ENCODE measurements at regions of chr9 and their contacts with region 1.

Region 1: DNA sequence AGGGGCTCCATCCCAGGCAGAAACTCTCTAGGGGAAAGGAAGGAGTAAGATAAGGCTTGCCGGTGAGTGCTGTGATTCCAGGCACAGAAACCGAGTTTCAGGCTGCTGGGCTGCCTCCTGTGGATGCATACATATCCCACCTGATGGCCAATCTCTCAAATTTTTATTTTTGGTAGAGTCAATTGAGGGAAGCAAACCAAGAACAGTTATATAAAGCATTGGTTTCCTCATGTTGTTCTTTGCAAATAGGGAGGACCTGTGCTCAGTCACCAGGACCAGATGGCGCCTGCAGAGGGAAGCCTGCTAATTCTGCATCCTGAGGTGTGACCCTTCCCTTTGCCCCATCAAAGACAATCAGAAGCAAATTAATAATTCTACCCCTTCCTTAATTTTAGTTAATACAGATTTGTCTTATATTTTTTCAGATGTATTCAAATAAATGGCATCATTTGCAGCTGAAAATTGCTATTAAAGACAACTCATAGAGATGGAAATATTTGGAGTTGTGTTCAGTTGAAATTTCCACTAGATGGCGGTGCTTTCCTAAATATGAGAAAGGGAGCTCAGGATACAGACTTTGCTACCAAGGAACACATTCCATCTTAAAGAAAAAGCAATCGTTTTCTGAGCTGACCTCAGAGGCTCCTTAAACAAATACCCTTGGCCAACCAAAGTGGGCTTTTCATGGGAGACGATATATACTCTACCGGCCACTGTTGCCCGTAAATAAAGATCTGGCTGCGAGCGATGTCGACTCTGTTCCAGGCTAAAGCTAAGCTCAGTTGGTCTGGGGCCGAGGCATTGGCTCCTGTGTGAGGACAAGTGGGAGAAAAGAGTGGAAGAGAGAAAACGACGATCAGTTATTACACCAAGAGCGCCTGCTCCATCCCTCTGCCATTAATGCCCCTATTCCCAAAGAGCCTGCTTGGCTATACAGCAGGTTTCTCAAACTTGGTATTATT is 225.7 kb upstream of the KLF9 start:
- DNase-seq: no peak
- CTCF ChIP-seq: peak; percentile 42

Region 2: DNA sequence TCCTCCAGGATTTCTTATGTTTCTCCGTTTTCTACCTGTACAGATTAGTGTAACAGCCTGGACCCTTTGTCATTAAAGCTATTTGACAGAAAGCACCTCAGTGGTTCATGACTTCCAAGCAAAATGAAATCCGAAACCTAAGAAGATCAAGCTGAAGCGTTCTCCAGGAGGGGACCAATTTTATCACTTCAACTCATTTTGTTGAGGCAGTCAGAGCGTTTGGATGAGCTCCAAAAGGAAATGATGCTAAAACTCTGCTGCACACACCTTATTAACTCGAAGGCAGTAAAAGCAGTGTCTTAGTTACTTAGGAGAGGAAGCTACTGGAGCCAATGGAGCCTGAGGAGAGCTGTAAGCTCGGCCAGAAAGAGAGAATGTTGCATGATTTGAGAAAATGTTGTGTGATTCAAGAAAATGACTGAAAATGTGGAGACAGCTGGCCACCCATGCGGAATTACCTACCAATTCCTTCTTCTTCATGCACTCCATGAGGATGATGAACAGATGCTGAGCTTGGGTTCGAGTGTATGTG is 121.1 kb after region 1 on chr9:
- CTCF ChIA-PET with region 1: no interaction called
- POLR2A ChIA-PET with region 1: no interaction called
- DNase-seq: no peak
- CTCF ChIP-seq: no peak

Region 3: DNA sequence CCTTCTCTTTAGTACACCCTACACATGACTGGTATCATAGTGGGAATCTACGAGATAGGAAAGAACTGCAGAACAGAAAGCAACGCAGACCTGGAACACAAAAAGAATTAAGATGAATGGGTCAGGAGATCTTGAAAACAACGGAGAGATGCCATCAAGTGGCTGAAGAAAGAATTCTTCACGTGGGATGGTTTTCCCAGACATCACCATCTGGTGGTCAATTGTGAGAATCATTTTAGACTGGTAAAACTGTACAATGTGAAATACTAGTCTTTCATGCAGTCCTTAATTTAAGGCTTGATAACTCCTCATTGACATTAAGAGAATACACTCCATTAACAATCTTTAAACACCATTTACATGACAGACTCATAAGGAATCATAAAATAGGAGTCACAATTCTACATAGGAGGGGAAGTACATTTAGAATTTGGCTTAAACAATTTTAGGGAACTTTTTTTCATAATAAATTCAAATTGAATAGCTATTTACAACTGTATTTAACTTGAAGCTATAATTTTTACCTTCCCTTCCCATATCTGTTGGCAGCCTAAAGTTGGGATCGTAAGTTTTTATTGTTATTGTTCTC is 609.7 kb after region 1 on chr9:
- CTCF ChIA-PET with region 1: interaction called, 24 read pairs
- POLR2A ChIA-PET with region 1: no interaction called
- DNase-seq: peak; percentile 23
- CTCF ChIP-seq: peak; percentile 58

Measured in GM10248 (cell line).